Caco-2 (cell line): ENCODE measurements at regions of chr3 and their contacts with region 1.

Region 1: GRCh38 chr3:128307029-128307633 is 153.8 kb downstream of the EEFSEC start:
- DNase-seq: peak; percentile 51 to 52
- H3K4me3 ChIP-seq: no peak overlapping the region
- H3K4me3 Mint-ChIP-seq: no peak overlapping the region
- H3K27ac Mint-ChIP-seq: no peak overlapping the region
- H3K4me1 ChIP-seq: peaks cover 9% of the 10 kb centered on the region
- H3K4me1 Mint-ChIP-seq: no peaks in the 10 kb centered on the region
- H3K27me3 ChIP-seq: no peaks in the 10 kb centered on the region
- H3K27me3 Mint-ChIP-seq: no peaks in the 10 kb centered on the region
- CTCF ChIP-seq: peak; percentile 21 to 65

Region 2: DNA sequence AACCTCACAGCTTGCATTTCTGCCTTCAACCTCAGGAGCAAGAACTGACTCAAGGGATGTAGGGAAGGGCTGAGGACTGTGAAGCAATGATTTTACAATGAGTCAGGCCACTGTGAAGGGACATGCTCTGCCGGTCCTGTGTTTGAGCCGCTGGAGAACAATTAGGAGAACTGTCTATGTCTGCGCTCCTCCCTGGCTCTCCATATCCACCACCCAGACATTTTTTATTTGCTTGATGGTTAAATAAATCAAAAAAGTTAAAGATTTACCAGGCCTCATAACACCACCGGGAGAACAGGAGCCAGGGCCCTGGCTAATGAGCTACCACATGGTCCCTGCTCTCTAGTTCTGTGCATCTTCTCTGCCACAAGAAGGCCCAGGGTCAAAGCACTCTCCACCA is 225.3 kb before region 1 on chr3:
- CTCF ChIA-PET with region 1: no interaction called
- POLR2A ChIA-PET with region 1: no interaction called
- intact Hi-C with region 1: no loop called
- DNase-seq: no peak
- H3K4me3 ChIP-seq: no peak overlapping the region
- H3K4me3 Mint-ChIP-seq: no peak overlapping the region
- H3K27ac Mint-ChIP-seq: no peak overlapping the region
- H3K4me1 ChIP-seq: peaks cover 5% of the 10 kb centered on the region; the same call in 1 of the 2 replicates
- H3K4me1 Mint-ChIP-seq: peaks cover 6% of the 10 kb centered on the region
- H3K27me3 ChIP-seq: no peaks in the 10 kb centered on the region
- H3K27me3 Mint-ChIP-seq: no peaks in the 10 kb centered on the region
- CTCF ChIP-seq: no peak

Region 3: DNA sequence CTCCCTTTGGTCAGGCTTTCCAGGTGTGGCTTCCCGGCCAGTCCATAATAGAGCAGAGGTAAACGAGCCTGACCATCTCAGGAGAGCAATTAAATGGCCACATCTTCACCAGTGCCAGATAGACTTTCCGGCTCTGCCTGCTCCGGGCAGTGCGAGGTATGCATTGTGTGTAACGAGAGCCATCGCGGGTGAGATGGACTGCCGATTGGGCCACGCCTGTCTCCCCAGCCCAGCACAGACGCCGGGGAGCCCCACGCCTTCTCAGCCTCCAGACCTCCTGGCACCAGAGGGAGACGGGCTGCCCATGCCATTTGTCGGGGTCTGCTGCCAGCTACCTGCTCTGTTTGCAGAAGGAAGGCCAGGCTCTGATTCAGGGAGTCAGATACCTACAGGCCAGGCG is 97.1 kb after region 1 on chr3:
- CTCF ChIA-PET with region 1: no interaction called
- POLR2A ChIA-PET with region 1: no interaction called
- intact Hi-C with region 1: no loop called
- DNase-seq: no peak
- H3K4me3 ChIP-seq: no peak overlapping the region
- H3K4me3 Mint-ChIP-seq: no peak overlapping the region
- H3K27ac Mint-ChIP-seq: no peak overlapping the region
- H3K4me1 ChIP-seq: no peaks in the 10 kb centered on the region
- H3K4me1 Mint-ChIP-seq: no peaks in the 10 kb centered on the region
- H3K27me3 ChIP-seq: no peaks in the 10 kb centered on the region
- H3K27me3 Mint-ChIP-seq: no peaks in the 10 kb centered on the region
- CTCF ChIP-seq: no peak

Region 4: GRCh38 chr3:128497387-128498126 is 190.4 kb after region 1 on chr3:
- CTCF ChIA-PET with region 1: interaction called, 16 read pairs
- POLR2A ChIA-PET with region 1: no interaction called
- intact Hi-C with region 1: loop called (anchors 1 kb)
- DNase-seq: peak; percentile 83 to 87
- H3K4me3 ChIP-seq: peak overlapping the region; percentile 47
- H3K4me3 Mint-ChIP-seq: peak overlapping the region; percentile 79
- H3K27ac Mint-ChIP-seq: peak overlapping the region; percentile 58
- H3K4me1 ChIP-seq: peaks cover 8% of the 10 kb centered on the region; the same call in 1 of the 2 replicates
- H3K4me1 Mint-ChIP-seq: peaks cover 13% of the 10 kb centered on the region
- H3K27me3 ChIP-seq: no peaks in the 10 kb centered on the region
- H3K27me3 Mint-ChIP-seq: no peaks in the 10 kb centered on the region
- CTCF ChIP-seq: peak; percentile 82 to 83

Region 5: DNA sequence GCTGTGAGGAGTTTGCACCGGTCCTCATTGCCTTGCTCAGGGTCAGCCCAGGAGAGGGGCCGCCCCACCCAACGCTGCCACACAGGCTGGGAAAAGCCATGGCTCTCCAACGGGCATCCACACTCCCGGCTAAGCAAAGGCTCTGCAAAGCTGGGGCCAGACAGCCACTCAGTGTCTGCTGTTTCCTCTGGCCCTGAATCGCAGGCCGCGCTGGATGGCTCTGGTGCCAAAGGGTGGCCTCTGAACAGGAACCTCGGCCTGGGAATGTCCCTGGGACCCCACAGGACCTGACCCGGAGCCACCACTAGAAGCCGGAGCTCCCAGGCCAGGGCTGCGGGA is 300.5 kb after region 1 on chr3:
- CTCF ChIA-PET with region 1: no interaction called
- POLR2A ChIA-PET with region 1: no interaction called
- intact Hi-C with region 1: loop called (anchors 5 kb)
- DNase-seq: no peak
- H3K4me3 ChIP-seq: no peak overlapping the region
- H3K4me3 Mint-ChIP-seq: no peak overlapping the region
- H3K27ac Mint-ChIP-seq: no peak overlapping the region
- H3K4me1 ChIP-seq: peaks cover 6% of the 10 kb centered on the region; the same call in 1 of the 2 replicates
- H3K4me1 Mint-ChIP-seq: no peaks in the 10 kb centered on the region
- H3K27me3 ChIP-seq: no peaks in the 10 kb centered on the region
- H3K27me3 Mint-ChIP-seq: no peaks in the 10 kb centered on the region
- CTCF ChIP-seq: no peak